ENCODE measurements at regions of chr20 and their contacts with region 1.

Region 1: DNA sequence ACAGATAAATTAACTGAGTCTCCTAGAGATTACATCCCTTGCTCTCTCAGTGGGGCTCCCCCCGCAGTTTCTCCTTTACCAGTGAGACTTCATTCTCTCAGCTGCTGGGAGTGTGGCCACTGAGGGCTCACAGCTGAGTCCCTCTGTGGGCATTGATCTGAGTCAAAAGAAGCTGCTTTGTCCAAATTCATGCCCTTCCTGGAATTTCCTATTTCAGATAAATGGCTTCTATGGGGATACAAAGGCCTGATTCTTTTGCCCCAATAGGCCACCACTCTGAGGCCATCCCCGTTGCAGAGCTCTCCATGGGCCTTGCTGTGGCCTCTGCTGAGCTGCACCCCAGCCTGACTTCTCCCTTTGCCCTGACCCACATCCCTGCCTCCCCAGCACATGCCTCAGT is 10.0 kb downstream of the CST5 start:
- DNase-seq: no peak
- ATAC-seq: no peak
- H3K4me3 ChIP-seq: no peak overlapping the region
- H3K27ac ChIP-seq: no peak overlapping the region
- H3K4me1 ChIP-seq: no peaks in the 10 kb centered on the region
- H3K27me3 ChIP-seq: peaks cover 0 to 85% (median 49%) of the 10 kb centered on the region in 7 donors
- CTCF ChIP-seq: no peak

Region 2: DNA sequence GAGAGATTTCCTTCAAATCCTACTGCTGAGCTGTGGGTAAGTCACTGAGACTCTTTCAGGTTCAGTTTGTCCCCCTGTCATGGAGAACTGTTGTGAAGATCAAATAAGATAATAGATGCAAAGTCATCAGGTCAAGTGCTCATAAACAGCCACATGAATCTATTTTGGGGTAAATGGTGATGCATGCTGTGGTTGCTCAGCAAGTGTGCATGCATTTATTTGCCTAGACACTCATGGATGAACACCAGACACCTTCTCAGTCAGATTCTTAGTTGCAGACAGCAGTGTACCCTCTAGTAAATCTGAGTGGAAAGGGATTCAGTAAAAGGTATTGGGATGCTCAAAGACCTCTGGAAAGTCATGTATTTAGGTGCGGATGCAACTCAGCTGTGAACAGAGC is 1117.2 kb before region 1 on chr20:
- intact Hi-C with region 1: loop called in 1 of 10 experiments (anchors 5 kb)
- DNase-seq: no peak
- ATAC-seq: no peak
- H3K4me3 ChIP-seq: no peak overlapping the region
- H3K27ac ChIP-seq: no peak overlapping the region
- H3K4me1 ChIP-seq: no peaks in the 10 kb centered on the region
- H3K27me3 ChIP-seq: no peaks in the 10 kb centered on the region
- CTCF ChIP-seq: no peak

Region 3: DNA sequence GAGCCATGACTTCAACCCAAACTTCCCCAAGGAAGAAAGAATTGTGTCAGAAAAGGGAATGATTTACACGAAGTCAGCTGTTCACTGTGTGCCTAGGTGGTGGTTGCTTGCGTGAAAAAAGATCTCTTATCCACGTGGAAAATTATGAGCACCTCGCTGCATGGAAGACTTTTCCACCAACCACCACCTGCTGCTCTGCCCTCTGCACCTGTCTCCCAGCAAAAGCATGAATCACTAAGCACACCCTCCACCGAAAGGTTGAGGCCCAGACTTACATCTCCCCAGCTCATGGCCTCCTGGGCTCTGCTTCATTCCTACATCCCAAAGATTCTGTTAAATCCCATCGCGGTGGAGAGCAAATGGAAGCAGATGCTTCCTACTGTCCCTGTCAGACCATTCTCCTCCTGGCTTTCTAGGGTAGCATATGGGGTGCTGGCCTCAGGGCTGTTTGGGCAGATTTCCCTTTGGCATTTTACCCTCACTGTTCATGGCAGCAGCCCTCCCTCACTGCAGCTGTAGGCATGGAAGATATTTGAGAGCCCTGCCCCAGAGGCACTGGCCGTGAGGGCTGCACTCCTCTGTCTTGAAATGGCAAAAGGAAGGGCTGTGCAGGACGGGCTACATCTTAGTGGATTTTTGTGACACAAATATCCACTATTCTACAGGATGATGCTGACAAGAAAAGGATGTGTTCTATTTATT is 47.7 kb after region 1 on chr20:
- intact Hi-C with region 1: loop called in 1 of 10 experiments (anchors 10 kb)
- DNase-seq: no peak
- ATAC-seq: no peak
- H3K4me3 ChIP-seq: no peak overlapping the region
- H3K27ac ChIP-seq: no peak overlapping the region
- H3K4me1 ChIP-seq: peaks cover 0 to 15% (median 3%) of the 10 kb centered on the region in 9 donors
- H3K27me3 ChIP-seq: peaks cover 0 to 20% (median 4%) of the 10 kb centered on the region in 7 donors
- CTCF ChIP-seq: no peak

Measured in heart right ventricle (tissue), 16 donors.